Panc1 (cell line): ENCODE measurements at regions of chr4 and their contacts with region 1.

Region 1: GRCh38 chr4:177393236-177393635 is 49.0 kb downstream of the AGA start:
- DNase-seq: no peak
- ATAC-seq: no peak
- H3K4me3 ChIP-seq: no peak overlapping the region
- H3K27ac ChIP-seq: no peak overlapping the region
- H3K4me1 ChIP-seq: no peaks in the 10 kb centered on the region
- H3K27me3 ChIP-seq: no peaks in the 10 kb centered on the region
- CTCF ChIP-seq: no peak

Region 2: GRCh38 chr4:177293208-177294033 is 99.8 kb before region 1 on chr4:
- CTCF ChIA-PET with region 1: no interaction called
- POLR2A ChIA-PET with region 1: interaction called, 10 read pairs
- in situ Hi-C with region 1: no loop called
- intact Hi-C with region 1: no loop called
- DNase-seq: no peak
- ATAC-seq: no peak
- H3K4me3 ChIP-seq: no peak overlapping the region
- H3K27ac ChIP-seq: no peak overlapping the region
- H3K4me1 ChIP-seq: no peaks in the 10 kb centered on the region
- H3K27me3 ChIP-seq: no peaks in the 10 kb centered on the region
- CTCF ChIP-seq: no peak

Region 3: GRCh38 chr4:177770776-177771175 is 377.5 kb after region 1 on chr4:
- CTCF ChIA-PET with region 1: no interaction called
- POLR2A ChIA-PET with region 1: no interaction called
- in situ Hi-C with region 1: no loop called
- intact Hi-C with region 1: no loop called
- DNase-seq: no peak
- ATAC-seq: no peak
- H3K4me3 ChIP-seq: no peak overlapping the region
- H3K27ac ChIP-seq: no peak overlapping the region
- H3K4me1 ChIP-seq: no peaks in the 10 kb centered on the region
- H3K27me3 ChIP-seq: no peaks in the 10 kb centered on the region
- CTCF ChIP-seq: no peak